Activated naive CD4-positive, alpha-beta T cell treated with anti-CD3 and anti-CD28 coated beads for 36 hours (primary cell): ENCODE measurements at regions of chr16 and their contacts with region 1.

Region 1: GRCh38 chr16:27315277-27316037 is 1.7 kb downstream of the IL4R start:
- DNase-seq: peak; percentile 86
- H3K4me3 Mint-ChIP-seq: peak overlapping the region; percentile 99
- H3K27ac Mint-ChIP-seq: peak overlapping the region; percentile 97
- H3K4me1 Mint-ChIP-seq: peaks cover 59% of the 10 kb centered on the region
- H3K27me3 Mint-ChIP-seq: no peaks in the 10 kb centered on the region

Region 2: DNA sequence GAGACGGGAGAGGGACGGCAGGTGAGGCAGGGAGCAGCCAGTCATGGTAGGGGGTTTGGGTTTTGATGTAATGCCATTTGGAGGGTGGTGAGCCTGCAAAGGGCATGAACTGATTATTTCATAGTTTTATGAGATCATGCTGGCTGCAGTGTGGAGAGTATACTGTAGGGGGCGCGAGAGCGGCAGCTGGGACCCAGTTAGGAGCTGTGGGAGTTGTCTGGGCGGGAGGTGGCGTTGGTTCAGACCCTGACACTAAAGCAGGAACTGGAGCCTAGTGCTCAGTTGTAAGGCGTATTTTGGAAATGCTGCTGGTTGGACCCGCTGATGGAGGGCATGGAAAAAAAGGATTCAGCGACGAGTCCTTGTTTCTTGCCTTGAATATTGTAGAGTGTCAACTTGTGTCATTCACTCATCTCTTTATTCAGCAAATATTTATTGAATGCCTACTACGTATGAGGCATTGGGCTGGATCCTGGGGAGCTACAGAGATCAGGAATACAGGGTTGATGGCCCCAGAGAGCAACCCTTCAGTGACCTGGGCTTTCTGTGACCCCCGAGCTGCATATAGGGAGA is 135.9 kb before region 1 on chr16:
- CTCF ChIA-PET with region 1: interaction called, 23 read pairs
- intact Hi-C with region 1: loop called (anchors 1 kb)
- DNase-seq: peak; percentile 98
- H3K4me3 Mint-ChIP-seq: no peak overlapping the region
- H3K27ac Mint-ChIP-seq: peak overlapping the region; percentile 67
- H3K4me1 Mint-ChIP-seq: peaks cover 48% of the 10 kb centered on the region
- H3K27me3 Mint-ChIP-seq: no peaks in the 10 kb centered on the region

Region 3: GRCh38 chr16:27217256-27217655 is 98.2 kb before region 1 on chr16:
- CTCF ChIA-PET with region 1: no interaction called
- intact Hi-C with region 1: no loop called
- DNase-seq: no peak
- H3K4me3 Mint-ChIP-seq: no peak overlapping the region
- H3K27ac Mint-ChIP-seq: no peak overlapping the region
- H3K4me1 Mint-ChIP-seq: peaks cover 2% of the 10 kb centered on the region
- H3K27me3 Mint-ChIP-seq: no peaks in the 10 kb centered on the region

Region 4: DNA sequence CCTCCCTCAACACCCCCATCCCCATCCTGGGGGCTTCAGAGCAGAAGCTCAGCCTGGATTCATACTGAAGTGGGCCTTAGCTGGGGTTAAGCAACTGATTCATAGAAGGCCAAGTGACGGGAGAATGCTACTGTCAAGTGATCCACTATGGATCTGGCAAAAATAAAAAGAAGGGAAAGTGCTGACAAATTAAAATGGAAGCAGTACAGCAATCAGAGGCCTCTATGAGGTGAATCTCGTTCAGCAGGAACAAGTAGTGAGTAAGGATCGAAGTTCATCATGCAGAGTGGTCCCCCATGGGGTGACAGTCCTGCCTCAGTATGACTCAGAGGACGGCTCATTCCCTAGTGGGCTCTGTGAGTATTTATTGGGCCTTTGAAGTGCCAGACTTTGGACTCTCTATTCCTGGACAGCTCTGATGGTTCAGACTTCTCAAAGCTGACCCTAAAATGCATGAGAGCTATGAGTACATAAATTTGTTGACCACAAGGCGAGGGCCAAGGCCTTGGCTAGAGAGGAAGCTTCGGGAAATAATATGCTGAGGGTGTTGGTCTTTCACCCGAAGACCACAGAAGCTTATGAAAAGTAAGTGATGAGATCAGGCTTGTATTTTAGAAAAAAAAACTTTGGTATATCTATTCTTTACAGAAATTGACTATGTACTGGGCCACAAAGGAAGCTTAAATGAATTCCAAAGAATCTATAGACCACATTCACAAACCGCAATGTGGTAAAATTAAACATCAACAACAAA is 41.6 kb before region 1 on chr16:
- CTCF ChIA-PET with region 1: interaction called, 4 read pairs
- intact Hi-C with region 1: loop called (anchors 2 kb)
- DNase-seq: peak; percentile 54
- H3K4me3 Mint-ChIP-seq: peak overlapping the region; percentile 7
- H3K27ac Mint-ChIP-seq: peak overlapping the region; percentile 72
- H3K4me1 Mint-ChIP-seq: peaks cover 65% of the 10 kb centered on the region
- H3K27me3 Mint-ChIP-seq: no peaks in the 10 kb centered on the region

Region 5: DNA sequence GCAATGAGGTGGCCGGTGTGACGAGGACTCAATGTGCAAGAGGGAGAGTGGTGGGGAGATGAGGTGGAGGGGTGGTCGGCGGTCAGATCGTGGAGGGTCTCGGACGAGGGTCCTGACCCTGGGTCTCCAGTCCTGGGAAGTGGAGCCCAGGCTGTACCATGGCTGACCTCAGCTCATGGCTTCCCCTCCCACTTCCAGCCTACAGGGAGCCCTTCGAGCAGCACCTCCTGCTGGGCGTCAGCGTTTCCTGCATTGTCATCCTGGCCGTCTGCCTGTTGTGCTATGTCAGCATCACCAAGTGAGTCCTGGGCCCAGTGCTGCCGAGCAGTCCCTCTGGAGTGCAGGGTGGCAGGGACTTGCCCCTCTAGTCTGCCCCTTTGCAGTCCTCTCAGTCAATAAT is 40.2 kb after region 1 on chr16:
- CTCF ChIA-PET with region 1: interaction called, 19 read pairs
- intact Hi-C with region 1: no loop called
- DNase-seq: peak; percentile 71
- H3K4me3 Mint-ChIP-seq: no peak overlapping the region
- H3K27ac Mint-ChIP-seq: peak overlapping the region; percentile 76
- H3K4me1 Mint-ChIP-seq: peaks cover 13% of the 10 kb centered on the region
- H3K27me3 Mint-ChIP-seq: no peaks in the 10 kb centered on the region

Region 6: GRCh38 chr16:27408012-27408601 is 92.7 kb after region 1 on chr16:
- CTCF ChIA-PET with region 1: interaction called, 4 read pairs
- intact Hi-C with region 1: loop called (anchors 1 kb)
- DNase-seq: peak; percentile 78
- H3K4me3 Mint-ChIP-seq: peak overlapping the region; percentile 98
- H3K27ac Mint-ChIP-seq: peak overlapping the region; percentile 100
- H3K4me1 Mint-ChIP-seq: peaks cover 65% of the 10 kb centered on the region
- H3K27me3 Mint-ChIP-seq: no peaks in the 10 kb centered on the region

Region 7: DNA sequence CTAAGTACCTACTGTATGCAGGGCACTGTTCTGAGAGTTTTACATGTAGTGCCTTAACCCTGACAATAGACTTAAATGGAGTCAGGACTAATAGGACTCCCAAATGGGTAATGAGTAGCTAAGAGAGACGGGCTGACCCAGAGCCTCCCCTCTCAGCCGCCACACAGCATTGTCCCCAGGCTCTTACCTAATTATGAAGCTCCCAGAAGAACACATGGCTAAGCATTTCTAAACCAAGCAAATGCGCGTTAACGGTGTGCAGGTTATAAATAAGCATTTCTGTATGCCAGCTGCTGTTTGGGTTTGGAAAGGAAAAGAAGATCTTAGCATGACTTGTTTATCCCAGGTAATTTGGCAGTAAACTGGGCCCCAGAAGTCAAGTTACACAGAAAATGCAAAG is 248.8 kb after region 1 on chr16:
- CTCF ChIA-PET with region 1: no interaction called
- intact Hi-C with region 1: no loop called
- DNase-seq: no peak
- H3K4me3 Mint-ChIP-seq: no peak overlapping the region
- H3K27ac Mint-ChIP-seq: no peak overlapping the region
- H3K4me1 Mint-ChIP-seq: no peaks in the 10 kb centered on the region
- H3K27me3 Mint-ChIP-seq: no peaks in the 10 kb centered on the region